CD4-positive, alpha-beta T cell (primary cell): ENCODE measurements at regions of chr2 and their contacts with region 1.

Region 1: GRCh38 chr2:112254466-112255239 is at the start of gene ZC3H8:
- DNase-seq: peak; percentile 91 to 98 (median 96)
- ATAC-seq: peak; percentile 92
- H3K4me3 ChIP-seq: peak within 1 kb of the TSS; percentile 83
- H3K4me3 Mint-ChIP-seq: peak within 1 kb of the TSS; percentile 91
- H3K27ac ChIP-seq: peak within 1 kb of the TSS; percentile 92
- H3K27ac Mint-ChIP-seq: peak within 1 kb of the TSS; percentile 88
- H3K4me1 ChIP-seq: peaks cover 32% of the 10 kb centered on the region
- H3K4me1 Mint-ChIP-seq: peaks cover 21% of the 10 kb centered on the region
- H3K27me3 ChIP-seq: no peaks in the 10 kb centered on the region
- H3K27me3 Mint-ChIP-seq: no peaks in the 10 kb centered on the region
- CTCF ChIP-seq: no peak
- total RNA-seq, gene ZC3H8: 10.2 to 16.2 TPM

Region 2: DNA sequence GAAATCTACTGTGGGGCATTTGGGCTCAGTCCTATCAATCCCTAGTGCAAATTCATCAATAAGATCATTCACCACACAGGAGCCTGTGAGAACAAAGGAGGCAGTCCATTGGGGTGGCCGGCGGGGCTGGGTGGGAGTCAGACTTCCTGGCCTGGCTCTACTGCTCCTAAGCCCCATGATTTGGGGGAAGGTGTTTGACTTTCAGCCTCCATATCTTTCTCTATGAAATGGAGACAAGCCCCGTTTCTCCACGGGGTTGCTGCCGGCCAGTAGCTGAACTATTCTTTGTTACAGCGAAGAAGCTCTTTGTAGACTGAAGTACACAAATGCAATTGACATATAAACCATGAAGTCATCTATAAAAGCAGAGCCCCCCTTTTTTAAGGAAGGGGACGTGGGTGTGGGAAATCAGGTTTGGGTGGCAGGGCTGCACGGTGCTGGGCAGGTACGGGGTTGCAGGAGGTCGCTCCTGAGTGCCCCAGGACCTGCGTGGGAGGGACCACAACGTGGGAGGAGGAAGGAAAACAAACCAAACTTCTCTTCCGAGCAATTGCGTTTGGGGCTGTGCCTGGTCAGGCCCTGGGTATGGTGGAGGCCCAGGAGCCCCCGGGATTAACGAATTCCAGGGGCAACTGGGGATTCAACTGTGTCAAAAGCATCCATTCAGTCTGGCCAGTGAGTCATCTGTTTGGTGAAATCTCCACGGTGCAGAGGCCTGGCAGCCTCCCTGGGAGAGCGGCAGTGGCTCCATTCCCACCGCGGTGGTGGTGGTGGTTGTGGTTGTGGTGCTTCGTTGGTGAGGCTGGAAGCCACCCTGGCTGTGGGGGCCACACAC is 98.3 kb before region 1 on chr2:
- CTCF ChIA-PET with region 1: no interaction called
- POLR2A ChIA-PET with region 1: interaction called, 11 read pairs
- intact Hi-C with region 1: no loop called
- DNase-seq: peak in 9 of 14 experiments; percentile 11 to 65 (median 44)
- ATAC-seq: no peak
- H3K4me3 ChIP-seq: peak overlapping the region; percentile 47
- H3K4me3 Mint-ChIP-seq: peak overlapping the region; percentile 83
- H3K27ac ChIP-seq: peak overlapping the region; percentile 46 to 60
- H3K27ac Mint-ChIP-seq: peak overlapping the region; percentile 89
- H3K4me1 ChIP-seq: peaks cover 33% of the 10 kb centered on the region
- H3K4me1 Mint-ChIP-seq: peaks cover 31% of the 10 kb centered on the region
- H3K27me3 ChIP-seq: no peaks in the 10 kb centered on the region
- H3K27me3 Mint-ChIP-seq: no peaks in the 10 kb centered on the region
- CTCF ChIP-seq: no peak

Region 3: DNA sequence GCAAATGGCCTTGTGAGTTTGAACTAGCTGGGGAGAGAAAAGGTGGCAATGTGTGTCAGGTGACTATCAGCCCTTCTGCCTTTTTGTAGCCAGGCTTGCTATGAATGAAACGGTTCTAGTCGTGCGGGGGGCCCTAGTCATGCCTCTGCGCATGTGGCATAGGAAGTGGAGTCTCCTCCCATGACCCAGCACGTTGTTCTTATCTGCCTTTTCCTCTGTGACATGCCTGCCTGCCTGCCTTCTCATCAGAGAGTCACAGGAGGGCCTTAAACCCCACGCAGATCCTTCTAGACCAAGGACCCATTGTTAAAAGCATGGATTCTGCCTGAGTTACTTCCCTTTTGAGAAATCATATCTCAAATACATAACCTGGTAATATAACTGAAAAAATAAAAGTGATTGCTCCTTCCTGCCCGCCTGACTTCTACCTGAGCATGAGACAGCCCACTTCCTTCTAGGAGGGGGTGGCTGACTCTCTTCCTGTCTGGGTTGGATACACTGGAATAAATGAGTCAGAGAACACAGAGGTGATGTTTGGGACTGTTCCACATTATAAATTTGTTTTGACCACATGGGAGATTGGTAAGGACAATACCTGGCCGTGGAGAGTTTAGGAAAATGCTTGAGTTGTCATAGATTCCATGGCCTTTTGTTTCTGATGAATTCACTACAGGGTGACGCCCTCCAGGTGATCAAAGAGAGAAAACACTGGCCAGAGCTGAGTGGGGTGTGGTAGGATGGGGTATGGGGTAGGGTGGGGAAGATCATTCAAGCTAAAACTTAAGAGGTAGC is 66.7 kb before region 1 on chr2:
- CTCF ChIA-PET with region 1: interaction called, 6 read pairs
- POLR2A ChIA-PET with region 1: interaction called, 31 read pairs
- intact Hi-C with region 1: loop called (anchors 2 to 5 kb)
- DNase-seq: peak; percentile 59 to 93 (median 72)
- ATAC-seq: peak; percentile 82
- H3K4me3 ChIP-seq: peak overlapping the region; percentile 28
- H3K4me3 Mint-ChIP-seq: peak overlapping the region; percentile 56
- H3K27ac ChIP-seq: peak overlapping the region; percentile 90 to 96
- H3K27ac Mint-ChIP-seq: peak overlapping the region; percentile 94
- H3K4me1 ChIP-seq: peaks cover 79% of the 10 kb centered on the region
- H3K4me1 Mint-ChIP-seq: peaks cover 84% of the 10 kb centered on the region
- H3K27me3 ChIP-seq: no peaks in the 10 kb centered on the region
- H3K27me3 Mint-ChIP-seq: no peaks in the 10 kb centered on the region
- CTCF ChIP-seq: no peak

Region 4: GRCh38 chr2:112204411-112204810 is 50.2 kb before region 1 on chr2:
- CTCF ChIA-PET with region 1: no interaction called
- POLR2A ChIA-PET with region 1: no interaction called
- intact Hi-C with region 1: no loop called
- DNase-seq: no peak
- ATAC-seq: peak; percentile 48
- H3K4me3 ChIP-seq: no peak overlapping the region
- H3K4me3 Mint-ChIP-seq: no peak overlapping the region
- H3K27ac ChIP-seq: no peak overlapping the region
- H3K27ac Mint-ChIP-seq: no peak overlapping the region
- H3K4me1 ChIP-seq: no peaks in the 10 kb centered on the region
- H3K4me1 Mint-ChIP-seq: peaks cover 6% of the 10 kb centered on the region
- H3K27me3 ChIP-seq: no peaks in the 10 kb centered on the region
- H3K27me3 Mint-ChIP-seq: no peaks in the 10 kb centered on the region
- CTCF ChIP-seq: no peak

Region 5: DNA sequence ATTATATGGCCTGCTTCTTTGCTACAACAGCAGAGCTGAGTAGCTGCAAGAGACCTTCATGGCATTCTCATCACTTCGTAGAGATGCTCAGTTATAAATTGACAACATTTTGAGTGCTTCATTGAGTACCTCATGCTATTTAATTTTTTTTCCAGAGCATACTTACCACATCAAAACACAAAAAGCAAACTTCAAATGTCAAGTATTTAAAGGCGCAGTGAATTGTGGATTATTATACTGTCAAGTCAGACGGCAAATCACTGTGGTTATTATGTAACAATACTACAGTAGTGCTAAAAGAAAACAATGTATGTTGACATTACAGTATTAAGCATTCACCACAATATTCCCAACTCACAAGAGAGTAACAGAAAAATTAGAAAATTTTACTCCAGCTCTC is 12.3 kb before region 1 on chr2:
- CTCF ChIA-PET with region 1: interaction called, 7 read pairs
- POLR2A ChIA-PET with region 1: interaction called, 16 read pairs
- intact Hi-C with region 1: no loop called
- DNase-seq: no peak
- ATAC-seq: peak; percentile 77
- H3K4me3 ChIP-seq: no peak overlapping the region
- H3K4me3 Mint-ChIP-seq: peak overlapping the region; percentile 43
- H3K27ac ChIP-seq: no peak overlapping the region
- H3K27ac Mint-ChIP-seq: peak overlapping the region; percentile 68
- H3K4me1 ChIP-seq: no peaks in the 10 kb centered on the region
- H3K4me1 Mint-ChIP-seq: peaks cover 63% of the 10 kb centered on the region
- H3K27me3 ChIP-seq: no peaks in the 10 kb centered on the region
- H3K27me3 Mint-ChIP-seq: no peaks in the 10 kb centered on the region
- CTCF ChIP-seq: no peak

Region 6: DNA sequence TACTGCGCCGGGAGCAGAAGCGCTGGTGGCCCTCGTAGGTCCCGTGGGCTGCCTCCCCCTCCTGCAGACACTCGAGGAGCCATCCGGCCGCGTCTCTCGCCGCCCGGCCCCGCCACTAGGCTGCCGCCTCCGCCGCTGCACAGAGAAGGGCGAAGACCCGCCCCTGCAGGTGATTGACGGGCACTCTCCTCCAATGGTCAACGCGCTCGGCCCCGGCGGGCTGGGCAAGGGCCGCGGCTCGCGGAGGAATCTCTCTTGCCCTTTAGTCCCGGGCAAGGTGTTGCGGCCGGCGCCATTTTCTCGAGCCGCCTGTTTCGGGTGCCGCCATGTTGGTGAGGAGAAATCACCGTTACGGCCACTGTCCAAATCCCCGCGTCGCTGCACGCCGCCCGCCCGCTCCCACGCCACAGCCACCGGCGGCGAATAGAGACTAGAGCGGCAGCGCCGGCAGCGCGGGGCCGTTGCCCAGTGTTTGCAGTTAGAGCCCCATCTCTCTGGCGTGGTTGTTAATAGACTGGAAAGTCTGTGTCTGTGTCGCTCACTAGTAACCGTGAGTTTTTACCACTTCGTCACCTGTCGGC is 20.7 kb after region 1 on chr2 and contains the start of gene ZC3H6:
- CTCF ChIA-PET with region 1: interaction called, 7 read pairs
- POLR2A ChIA-PET with region 1: interaction called, 19 read pairs
- intact Hi-C with region 1: loop called (anchors 1 to 2 kb)
- DNase-seq: peak; percentile 97 to 100 (median 100)
- ATAC-seq: peak; percentile 90
- H3K4me3 ChIP-seq: peak within 1 kb of the TSS; percentile 94
- H3K4me3 Mint-ChIP-seq: peak within 1 kb of the TSS; percentile 98
- H3K27ac ChIP-seq: peak within 1 kb of the TSS; percentile 100
- H3K27ac Mint-ChIP-seq: peak within 1 kb of the TSS; percentile 100
- H3K4me1 ChIP-seq: peaks cover 8% of the 10 kb centered on the region
- H3K4me1 Mint-ChIP-seq: peaks cover 33% of the 10 kb centered on the region
- H3K27me3 ChIP-seq: no peaks in the 10 kb centered on the region
- H3K27me3 Mint-ChIP-seq: no peaks in the 10 kb centered on the region
- CTCF ChIP-seq: no peak
- total RNA-seq, gene ZC3H6: 18.0 to 21.4 TPM

Region 7: GRCh38 chr2:112481050-112481527 is 226.4 kb after region 1 on chr2:
- CTCF ChIA-PET with region 1: no interaction called
- POLR2A ChIA-PET with region 1: no interaction called
- intact Hi-C with region 1: loop called in 1 of 2 experiments (anchors 5 kb)
- DNase-seq: peak; percentile 72 to 91 (median 79)
- ATAC-seq: peak; percentile 81
- H3K4me3 ChIP-seq: peak overlapping the region; percentile 77
- H3K4me3 Mint-ChIP-seq: peak overlapping the region; percentile 93
- H3K27ac ChIP-seq: peak overlapping the region; percentile 48 to 75
- H3K27ac Mint-ChIP-seq: peak overlapping the region; percentile 85
- H3K4me1 ChIP-seq: peaks cover 28% of the 10 kb centered on the region
- H3K4me1 Mint-ChIP-seq: peaks cover 25% of the 10 kb centered on the region
- H3K27me3 ChIP-seq: no peaks in the 10 kb centered on the region
- H3K27me3 Mint-ChIP-seq: no peaks in the 10 kb centered on the region
- CTCF ChIP-seq: peak; percentile 84